Ovary (tissue), 10 donors: ENCODE measurements at regions of chr6 and their contacts with region 1.

Region 1: DNA sequence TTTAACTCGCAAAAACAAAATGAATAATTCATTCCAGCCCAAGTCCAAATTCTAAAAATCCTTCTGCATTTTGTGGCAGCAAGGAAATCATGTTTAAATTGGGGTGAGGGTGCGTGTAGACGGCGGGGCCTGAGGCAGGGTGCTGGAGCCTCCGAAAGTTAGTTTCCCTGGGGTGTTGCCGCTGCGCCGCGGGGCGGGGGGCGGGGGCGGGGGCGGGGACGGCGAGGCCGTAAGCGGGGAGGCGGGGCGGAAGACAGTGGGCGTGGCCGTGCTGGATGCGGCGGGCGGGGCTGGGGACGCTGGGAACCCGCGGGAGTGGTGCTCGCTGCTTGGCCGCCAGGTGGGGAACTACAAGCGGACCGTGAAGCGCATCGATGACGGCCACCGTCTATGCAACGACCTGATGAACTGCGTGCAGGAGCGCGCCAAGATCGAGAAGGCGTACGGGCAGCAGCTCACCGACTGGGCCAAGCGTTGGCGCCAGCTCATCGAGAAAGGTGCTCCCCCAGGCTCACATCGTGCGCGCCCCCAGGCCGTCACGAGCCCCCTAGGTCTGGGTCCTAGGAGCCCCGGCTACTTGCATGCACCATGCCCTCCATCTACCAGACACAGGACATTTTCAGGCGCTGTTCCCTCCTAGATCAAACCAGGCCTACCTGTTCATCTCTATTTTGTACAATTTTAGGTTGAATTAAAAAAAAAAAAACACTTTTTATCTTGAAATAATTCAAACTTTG is 29.0 kb downstream of the SPDEF start:
- DNase-seq: peak; percentile 95 to 98 (median 97)
- H3K4me3 ChIP-seq: peak overlapping the region; percentile 23
- H3K27ac ChIP-seq: peak overlapping the region in 1 of 2 donors; percentile 29
- H3K4me1 ChIP-seq: no peaks in the 10 kb centered on the region
- H3K27me3 ChIP-seq: no peaks in the 10 kb centered on the region
- CTCF ChIP-seq: peak; percentile 38 to 86 (median 75)
- EP300 ChIP-seq: no peak
- POLR2A ChIP-seq: no peak

Region 2: DNA sequence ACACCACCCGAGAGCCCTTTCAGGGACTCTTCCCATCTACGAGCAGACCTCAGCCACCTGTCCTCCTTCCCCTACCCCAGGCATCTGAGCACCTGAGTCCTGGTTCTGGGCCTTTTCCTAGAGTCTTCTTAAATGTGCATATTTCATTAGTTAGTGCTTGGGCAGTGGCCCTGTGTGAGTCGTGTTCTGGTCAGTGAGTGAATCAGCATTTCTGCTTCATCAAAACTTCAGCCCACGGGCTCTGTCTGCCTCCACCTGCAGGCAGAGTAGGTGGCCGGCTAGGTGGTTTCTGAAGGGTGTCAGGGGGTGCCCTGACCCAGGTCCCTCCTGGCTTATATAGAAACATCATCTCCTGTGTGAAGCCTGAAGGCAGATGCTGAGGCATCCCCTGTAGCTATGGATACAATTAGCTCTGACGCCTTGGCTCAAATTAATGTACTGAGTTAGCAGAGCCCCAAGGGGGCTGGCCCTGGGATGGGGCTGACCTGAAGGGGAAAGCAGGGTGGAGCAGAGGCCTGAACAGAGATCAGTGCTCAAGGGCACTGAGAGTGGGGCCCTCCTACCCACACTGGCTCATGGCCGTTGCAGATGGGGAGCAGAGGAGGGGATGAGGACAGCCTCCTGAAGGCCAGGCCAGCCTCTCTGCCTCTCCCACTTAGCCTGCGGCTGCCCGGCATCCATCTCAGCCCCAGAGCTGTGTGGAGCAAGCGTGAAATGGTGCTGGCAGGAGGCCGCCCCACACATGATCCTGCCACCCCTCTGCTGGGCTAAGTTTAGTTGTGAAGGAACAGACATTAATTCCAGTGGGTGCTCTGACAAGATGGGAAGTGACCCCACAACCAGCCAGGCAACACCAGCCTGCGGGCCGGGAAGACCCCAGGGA is 794.1 kb before region 1 on chr6:
- intact Hi-C with region 1: no loop called
- DNase-seq: no peak
- H3K4me3 ChIP-seq: no peak overlapping the region
- H3K27ac ChIP-seq: no peak overlapping the region
- H3K4me1 ChIP-seq: no peaks in the 10 kb centered on the region
- H3K27me3 ChIP-seq: no peaks in the 10 kb centered on the region
- CTCF ChIP-seq: no peak
- EP300 ChIP-seq: no peak
- POLR2A ChIP-seq: no peak

Region 3: GRCh38 chr6:34476447-34476846 is 50.7 kb before region 1 on chr6:
- intact Hi-C with region 1: no loop called
- DNase-seq: no peak
- H3K4me3 ChIP-seq: no peak overlapping the region
- H3K27ac ChIP-seq: no peak overlapping the region
- H3K4me1 ChIP-seq: no peaks in the 10 kb centered on the region
- H3K27me3 ChIP-seq: no peaks in the 10 kb centered on the region
- CTCF ChIP-seq: no peak
- EP300 ChIP-seq: no peak
- POLR2A ChIP-seq: no peak

Region 4: DNA sequence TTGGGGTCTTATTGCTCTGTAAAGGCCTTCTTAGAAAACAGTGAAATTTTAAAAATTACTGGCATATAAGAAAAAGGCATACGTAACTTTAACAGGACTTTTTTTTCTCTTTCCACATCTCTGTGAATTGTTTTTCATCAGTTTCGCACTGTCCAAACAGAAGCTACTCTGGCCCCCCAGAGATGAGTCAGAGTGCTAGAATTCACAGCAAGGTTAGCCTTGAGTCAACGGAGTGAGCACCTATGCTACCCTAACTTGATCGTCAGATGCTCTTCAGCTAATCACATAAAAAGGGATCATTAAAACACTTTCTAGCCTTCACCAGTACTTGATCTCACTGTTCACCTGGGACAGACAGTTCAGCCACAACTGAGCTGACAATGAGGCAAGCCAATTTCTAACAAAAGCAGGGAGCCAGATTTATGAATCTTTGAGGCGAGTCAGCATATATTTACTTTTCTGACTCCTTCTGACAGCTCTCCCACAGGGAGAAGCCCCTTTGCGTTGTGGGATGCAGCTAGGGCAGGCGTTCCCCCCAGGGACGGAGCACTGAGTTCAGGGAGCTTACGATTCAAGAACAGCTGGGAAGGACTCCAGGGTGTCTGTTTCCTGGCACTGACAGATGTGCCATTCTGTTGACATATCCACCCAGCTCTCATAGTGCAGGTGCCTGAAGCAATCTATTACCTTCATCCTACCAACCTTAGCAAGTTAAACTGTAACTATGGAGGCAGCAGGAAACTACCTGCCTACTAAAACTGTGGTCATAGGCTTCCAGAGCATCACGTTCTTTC is 75.4 kb after region 1 on chr6:
- intact Hi-C with region 1: loop called (anchors 5 kb)
- DNase-seq: no peak
- H3K4me3 ChIP-seq: no peak overlapping the region
- H3K27ac ChIP-seq: no peak overlapping the region
- H3K4me1 ChIP-seq: peaks cover 20% of the 10 kb centered on the region
- H3K27me3 ChIP-seq: no peaks in the 10 kb centered on the region
- CTCF ChIP-seq: no peak
- EP300 ChIP-seq: no peak
- POLR2A ChIP-seq: no peak

Region 5: DNA sequence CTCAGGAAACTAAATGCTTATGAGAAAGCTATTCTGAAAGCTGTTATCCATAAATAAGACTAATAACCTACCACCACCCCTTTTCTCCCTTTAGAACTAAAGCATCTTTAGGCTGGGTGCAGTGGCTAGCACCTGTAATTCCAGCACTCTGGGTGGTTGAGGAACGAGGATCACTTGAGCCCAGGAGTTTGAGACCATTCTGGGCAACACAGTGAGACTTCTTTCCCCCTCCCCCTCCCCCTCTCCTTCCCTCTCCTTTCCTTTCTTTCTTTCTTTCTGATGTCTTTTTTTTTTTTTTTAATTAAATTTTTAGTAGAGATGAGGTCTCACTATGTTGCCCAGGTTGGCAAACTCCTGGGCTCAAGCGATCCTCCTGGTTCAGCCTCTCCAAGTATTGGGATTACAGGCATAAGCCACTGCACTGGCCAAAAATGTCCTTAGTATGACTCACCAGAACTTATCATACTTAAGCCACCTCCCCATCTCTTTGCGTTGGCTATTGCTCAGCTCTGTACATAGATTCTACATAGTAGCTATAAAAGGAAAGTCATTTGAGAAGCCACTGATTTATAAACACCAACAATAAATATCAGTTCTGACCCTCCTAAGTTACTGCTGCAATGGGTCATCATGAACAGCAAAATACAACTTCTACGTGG is 83.8 kb after region 1 on chr6:
- intact Hi-C with region 1: loop called in 3 of 4 experiments (anchors 5 kb)
- DNase-seq: no peak
- H3K4me3 ChIP-seq: no peak overlapping the region
- H3K27ac ChIP-seq: no peak overlapping the region
- H3K4me1 ChIP-seq: no peaks in the 10 kb centered on the region
- H3K27me3 ChIP-seq: no peaks in the 10 kb centered on the region
- CTCF ChIP-seq: no peak
- EP300 ChIP-seq: no peak
- POLR2A ChIP-seq: no peak

Region 6: GRCh38 chr6:34855463-34855862 is 328.3 kb after region 1 on chr6:
- intact Hi-C with region 1: no loop called
- DNase-seq: no peak
- H3K4me3 ChIP-seq: no peak overlapping the region
- H3K27ac ChIP-seq: no peak overlapping the region
- H3K4me1 ChIP-seq: no peaks in the 10 kb centered on the region
- H3K27me3 ChIP-seq: no peaks in the 10 kb centered on the region
- CTCF ChIP-seq: no peak
- EP300 ChIP-seq: no peak
- POLR2A ChIP-seq: no peak

Region 7: GRCh38 chr6:35048631-35049083 is 521.5 kb after region 1 on chr6:
- intact Hi-C with region 1: no loop called
- DNase-seq: peak in 4 of 5 donors; percentile 23 to 55 (median 41)
- H3K4me3 ChIP-seq: no peak overlapping the region
- H3K27ac ChIP-seq: peak overlapping the region; percentile 20 to 72
- H3K4me1 ChIP-seq: peaks cover 35% of the 10 kb centered on the region
- H3K27me3 ChIP-seq: no peaks in the 10 kb centered on the region
- CTCF ChIP-seq: no peak
- EP300 ChIP-seq: no peak
- POLR2A ChIP-seq: no peak